ENCODE measurements at regions of chr16 and their contacts with region 1.

Region 1: DNA sequence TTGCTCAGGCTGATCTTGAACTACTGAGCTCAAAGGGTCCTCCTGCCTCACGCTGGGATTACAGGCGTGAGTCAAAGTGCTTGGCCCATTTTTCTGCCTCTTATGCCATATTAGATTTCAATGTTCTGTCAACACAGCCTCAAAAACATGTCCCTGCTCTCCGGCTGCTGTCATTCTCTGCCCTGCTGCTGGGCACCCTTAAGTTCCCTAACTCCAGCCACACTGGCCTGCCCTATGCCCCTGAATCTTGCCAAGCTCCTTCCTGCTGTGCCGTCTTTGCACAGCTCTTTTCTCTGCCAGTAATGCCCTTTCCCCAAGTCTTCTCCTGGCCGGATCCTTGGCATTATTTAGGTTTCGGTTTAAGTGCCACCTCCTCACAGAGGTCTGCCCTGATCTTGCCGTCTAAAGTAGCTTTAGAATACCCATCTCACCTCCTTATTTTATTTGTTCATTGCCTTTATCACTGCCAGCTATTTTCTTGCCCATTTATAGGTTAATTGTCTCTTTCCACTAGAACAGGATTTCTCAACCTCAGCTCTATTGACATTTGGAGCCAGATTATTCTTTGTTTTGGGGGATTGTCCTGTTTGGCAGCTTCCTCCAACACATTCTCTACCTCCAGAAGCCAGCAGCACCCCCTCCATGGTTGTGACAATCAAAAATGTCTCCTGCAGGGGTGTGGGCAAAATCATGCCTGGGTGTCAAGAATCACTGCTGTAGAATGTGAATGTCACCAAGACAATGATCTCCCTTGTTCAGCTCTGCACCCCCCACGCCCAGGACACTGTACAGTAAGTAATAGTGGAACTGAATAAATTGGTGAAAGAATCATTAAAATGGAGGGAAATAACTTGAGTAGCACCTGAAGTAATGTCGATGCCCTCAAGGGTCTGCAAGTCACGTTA is 168.2 kb downstream of the CYLD start:
- DNase-seq: no peak
- ATAC-seq: no peak
- H3K4me3 Mint-ChIP-seq: no peak overlapping the region
- H3K27ac Mint-ChIP-seq: no peak overlapping the region
- H3K4me1 Mint-ChIP-seq: no peaks in the 10 kb centered on the region
- H3K27me3 Mint-ChIP-seq: peaks cover 12% of the 10 kb centered on the region
- CTCF ChIP-seq: no peak

Region 2: DNA sequence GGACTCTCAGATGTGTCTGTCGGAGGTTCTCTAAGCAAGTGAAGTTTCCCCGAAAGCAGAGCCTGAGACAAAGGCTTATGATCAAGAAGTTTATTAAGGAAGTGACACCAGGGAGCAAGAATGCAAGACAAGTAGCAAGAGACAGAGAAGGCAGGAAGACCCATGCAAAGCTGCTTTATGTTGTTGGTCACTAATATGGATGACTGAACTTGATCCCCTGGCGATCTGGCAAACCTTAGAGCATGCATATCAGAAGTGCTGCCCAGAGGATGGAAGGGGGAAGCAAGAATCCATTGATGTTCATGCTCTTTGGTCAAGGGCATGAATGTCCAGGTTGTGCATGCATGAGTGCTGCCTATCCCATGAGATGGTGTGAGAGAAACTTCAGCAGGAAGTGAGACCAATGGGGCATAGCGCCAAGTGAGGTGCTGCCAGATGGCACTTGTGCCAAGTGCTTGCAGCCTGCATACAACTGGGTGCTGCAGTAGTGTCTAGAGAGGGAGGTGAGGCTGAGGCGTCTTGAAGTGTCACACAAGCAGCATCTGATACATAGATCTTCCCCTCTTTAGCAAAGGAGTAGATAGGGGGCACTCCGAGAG is 64.5 kb after region 1 on chr16:
- CTCF ChIA-PET with region 1: no interaction called
- POLR2A ChIA-PET with region 1: no interaction called
- intact Hi-C with region 1: loop called (anchors 10 kb)
- DNase-seq: no peak
- ATAC-seq: no peak
- H3K4me3 Mint-ChIP-seq: no peak overlapping the region
- H3K27ac Mint-ChIP-seq: no peak overlapping the region
- H3K4me1 Mint-ChIP-seq: no peaks in the 10 kb centered on the region
- H3K27me3 Mint-ChIP-seq: peaks cover 3% of the 10 kb centered on the region
- CTCF ChIP-seq: no peak

Region 3: DNA sequence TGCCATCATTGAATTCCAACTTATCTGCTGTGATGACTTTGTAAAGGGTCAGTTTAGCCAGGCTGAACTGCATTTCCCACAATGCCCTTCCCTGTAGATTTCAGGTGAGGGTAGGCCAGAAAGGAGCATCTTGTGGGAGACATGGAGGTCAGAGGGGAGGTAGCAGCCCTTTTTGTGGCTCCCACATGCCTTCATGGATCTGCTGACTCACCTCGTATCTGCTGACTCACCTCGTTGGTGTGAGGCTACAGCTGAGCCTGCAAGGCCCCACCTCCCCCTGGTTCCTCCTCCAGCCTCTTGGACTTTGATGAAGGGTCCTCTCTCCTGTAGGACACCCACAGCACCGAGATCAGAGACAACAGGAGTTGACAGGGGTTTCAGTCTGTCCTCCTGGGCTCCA is 138.5 kb after region 1 on chr16:
- CTCF ChIA-PET with region 1: no interaction called
- POLR2A ChIA-PET with region 1: no interaction called
- intact Hi-C with region 1: no loop called
- DNase-seq: no peak
- ATAC-seq: no peak
- H3K4me3 Mint-ChIP-seq: no peak overlapping the region
- H3K27ac Mint-ChIP-seq: no peak overlapping the region
- H3K4me1 Mint-ChIP-seq: no peaks in the 10 kb centered on the region
- H3K27me3 Mint-ChIP-seq: no peaks in the 10 kb centered on the region
- CTCF ChIP-seq: no peak

Measured in activated CD8-positive, alpha-beta T cell treated with anti-CD3 and anti-CD28 coated beads for 36 hours (primary cell).